ENCODE measurements at regions of chr5 and their contacts with region 1.

Region 1: GRCh38 chr5:125245216-125245615 is 498.8 kb upstream of the ZNF608 start:
- DNase-seq: no peak
- ATAC-seq: no peak
- H3K4me3 ChIP-seq: no peak overlapping the region
- H3K27ac ChIP-seq: no peak overlapping the region
- H3K4me1 ChIP-seq: peaks cover 0 to 16% (median 0%) of the 10 kb centered on the region in 9 donors
- H3K27me3 ChIP-seq: no peaks in the 10 kb centered on the region
- CTCF ChIP-seq: no peak

Region 2: DNA sequence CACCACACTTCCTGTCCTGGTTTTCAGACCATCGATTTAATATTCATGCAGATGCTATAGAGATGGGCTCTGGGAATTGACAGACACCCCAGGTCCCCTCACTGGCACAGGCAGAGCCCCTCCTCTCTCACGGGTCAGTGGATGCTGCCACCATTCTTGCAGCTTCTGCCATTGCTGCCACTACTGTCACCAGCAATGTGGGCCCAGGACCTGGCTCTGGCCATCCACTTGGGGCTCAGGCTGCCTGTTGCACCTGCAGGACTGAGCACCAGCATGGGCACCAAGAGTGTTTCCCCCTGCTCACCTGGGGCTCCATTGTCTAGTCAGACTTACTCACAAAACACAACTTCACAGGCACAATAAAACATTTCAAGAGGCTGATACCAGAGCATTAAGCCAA is 19.8 kb before region 1 on chr5:
- intact Hi-C with region 1: loop called in 1 of 10 experiments (anchors 1 kb)
- DNase-seq: no peak
- ATAC-seq: no peak
- H3K4me3 ChIP-seq: no peak overlapping the region
- H3K27ac ChIP-seq: no peak overlapping the region
- H3K4me1 ChIP-seq: no peaks in the 10 kb centered on the region
- H3K27me3 ChIP-seq: no peaks in the 10 kb centered on the region
- CTCF ChIP-seq: no peak

Region 3: DNA sequence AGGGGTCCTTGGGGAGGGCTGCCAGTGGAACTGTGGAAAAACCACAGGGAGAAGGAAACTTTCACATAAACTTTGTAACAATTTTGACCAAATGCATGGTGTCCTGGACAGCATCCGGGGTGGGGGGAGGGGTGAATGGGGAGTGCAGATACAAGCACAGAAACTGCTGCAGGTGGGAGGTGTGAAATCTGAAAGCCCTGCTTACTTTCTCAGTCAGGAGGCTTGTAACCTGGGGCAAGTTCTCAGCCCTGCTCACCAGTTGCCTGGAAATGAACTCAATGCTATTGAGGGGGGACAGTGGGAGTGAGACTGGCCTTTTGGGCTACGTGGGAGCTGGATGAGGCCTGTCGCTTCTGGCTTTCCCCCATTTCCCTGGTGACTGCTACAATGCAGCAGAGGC is 195.7 kb after region 1 on chr5:
- intact Hi-C with region 1: no loop called
- DNase-seq: no peak
- ATAC-seq: no peak
- H3K4me3 ChIP-seq: no peak overlapping the region
- H3K27ac ChIP-seq: no peak overlapping the region
- H3K4me1 ChIP-seq: no peaks in the 10 kb centered on the region
- H3K27me3 ChIP-seq: no peaks in the 10 kb centered on the region
- CTCF ChIP-seq: no peak

Measured in heart right ventricle (tissue), 16 donors.